Lower leg skin (tissue), 4 donors: ENCODE measurements at regions of chr7 and their contacts with region 1.

Region 1: DNA sequence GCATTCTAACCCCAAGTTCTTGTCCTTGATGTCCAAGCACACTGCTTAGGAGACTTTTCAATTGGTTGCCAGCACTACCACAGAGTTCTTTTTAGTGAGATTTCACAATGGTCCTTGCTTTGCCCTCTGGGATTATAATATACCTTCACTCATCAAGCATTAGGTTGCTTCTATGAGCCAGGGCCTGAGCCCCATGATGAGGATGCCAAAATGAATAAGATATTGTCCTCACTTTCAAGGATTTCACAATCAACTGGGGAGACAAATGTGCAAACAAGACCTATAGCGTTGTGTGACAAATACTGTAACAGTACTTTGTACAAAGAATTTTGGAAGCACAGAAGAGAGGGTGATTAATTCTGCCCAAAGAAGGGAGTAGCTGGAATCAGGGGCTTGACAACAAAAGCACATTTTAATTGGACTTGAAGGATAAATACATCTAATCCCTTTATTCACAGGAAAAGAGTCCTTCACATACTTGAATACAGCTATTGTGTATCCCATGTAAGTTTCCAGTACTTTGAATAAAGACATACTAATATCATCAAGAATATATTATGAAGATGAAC is 263.6 kb upstream of the LRRN3 start:
- DNase-seq: no peak
- H3K4me3 ChIP-seq: no peak overlapping the region
- CTCF ChIP-seq: no peak
- POLR2A ChIP-seq: no peak

Region 2: DNA sequence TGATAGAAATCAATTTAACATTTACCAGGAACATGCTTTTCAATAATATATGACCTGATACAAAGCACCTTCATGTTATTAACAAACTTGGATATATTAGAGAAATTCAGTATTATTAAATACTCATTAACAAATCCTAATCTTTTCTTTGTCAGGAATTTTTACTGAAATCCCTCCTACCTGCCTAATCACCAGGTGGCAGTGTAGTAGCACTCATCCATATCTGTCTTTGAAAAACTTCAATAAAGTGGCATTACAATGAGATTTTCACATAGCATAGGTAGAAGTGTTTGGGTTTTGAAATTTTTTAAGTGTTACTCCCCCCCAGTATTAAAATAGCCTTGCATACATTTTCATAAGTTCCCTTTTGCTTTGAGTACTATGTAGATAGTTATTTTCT is 983.0 kb before region 1 on chr7:
- intact Hi-C with region 1: loop called (anchors 5 kb)
- DNase-seq: no peak
- H3K4me3 ChIP-seq: no peak overlapping the region
- CTCF ChIP-seq: no peak
- POLR2A ChIP-seq: no peak